ENCODE measurements at regions of chr7 and their contacts with region 1.

Region 1: GRCh38 chr7:73894733-73895551 is 34.0 kb downstream of the TMEM270 start:
- DNase-seq: peak; percentile 96 to 98
- ATAC-seq: peak; percentile 91
- H3K4me3 ChIP-seq: no peak overlapping the region
- H3K27ac ChIP-seq: peak overlapping the region; percentile 90 to 93
- H3K4me1 ChIP-seq: no peaks in the 10 kb centered on the region
- H3K27me3 ChIP-seq: no peaks in the 10 kb centered on the region

Region 2: GRCh38 chr7:73971704-73972341 is 76.9 kb after region 1 on chr7:
- intact Hi-C with region 1: loop called in 1 of 2 experiments (anchors 5 kb)
- DNase-seq: peak in 1 of 2 donors; percentile 47
- ATAC-seq: no peak
- H3K4me3 ChIP-seq: no peak overlapping the region
- H3K27ac ChIP-seq: no peak overlapping the region
- H3K4me1 ChIP-seq: no peaks in the 10 kb centered on the region
- H3K27me3 ChIP-seq: no peaks in the 10 kb centered on the region

Region 3: DNA sequence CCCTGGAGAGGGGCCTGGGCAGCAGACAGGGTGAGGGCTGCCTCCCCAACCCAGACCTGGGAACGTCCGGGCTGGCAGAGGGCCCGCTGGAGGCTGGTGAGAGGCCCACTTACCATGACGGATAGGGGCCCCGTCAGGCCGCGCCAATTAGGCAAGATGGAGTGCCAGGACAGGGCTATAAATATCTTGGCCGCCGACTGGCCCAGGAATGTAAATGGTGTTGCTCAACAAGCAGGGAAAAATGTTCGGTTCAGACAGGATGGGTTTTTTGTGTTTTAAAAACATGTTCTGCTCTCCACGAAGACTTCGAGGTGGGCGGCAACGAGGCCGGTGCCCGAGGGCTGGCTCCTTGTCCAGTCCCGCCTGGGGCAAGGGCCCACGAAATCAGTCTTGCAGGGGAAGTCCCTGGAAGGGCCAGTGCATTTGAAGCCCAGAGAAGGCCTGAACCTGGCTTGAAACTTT is 97.2 kb after region 1 on chr7:
- intact Hi-C with region 1: loop called (anchors 5 kb)
- DNase-seq: peak; percentile 93 to 96
- ATAC-seq: peak; percentile 88
- H3K4me3 ChIP-seq: no peak overlapping the region
- H3K27ac ChIP-seq: peak overlapping the region; percentile 84 to 97
- H3K4me1 ChIP-seq: no peaks in the 10 kb centered on the region
- H3K27me3 ChIP-seq: no peaks in the 10 kb centered on the region

Region 4: GRCh38 chr7:74012842-74013249 is 117.9 kb after region 1 on chr7:
- intact Hi-C with region 1: loop called in 1 of 2 experiments (anchors 5 kb)
- DNase-seq: peak; percentile 87 to 90
- ATAC-seq: peak; percentile 73
- H3K4me3 ChIP-seq: no peak overlapping the region
- H3K27ac ChIP-seq: peak overlapping the region; percentile 58 to 99
- H3K4me1 ChIP-seq: peaks cover 2 to 4% of the 10 kb centered on the region in 2 donors
- H3K27me3 ChIP-seq: no peaks in the 10 kb centered on the region

Region 5: DNA sequence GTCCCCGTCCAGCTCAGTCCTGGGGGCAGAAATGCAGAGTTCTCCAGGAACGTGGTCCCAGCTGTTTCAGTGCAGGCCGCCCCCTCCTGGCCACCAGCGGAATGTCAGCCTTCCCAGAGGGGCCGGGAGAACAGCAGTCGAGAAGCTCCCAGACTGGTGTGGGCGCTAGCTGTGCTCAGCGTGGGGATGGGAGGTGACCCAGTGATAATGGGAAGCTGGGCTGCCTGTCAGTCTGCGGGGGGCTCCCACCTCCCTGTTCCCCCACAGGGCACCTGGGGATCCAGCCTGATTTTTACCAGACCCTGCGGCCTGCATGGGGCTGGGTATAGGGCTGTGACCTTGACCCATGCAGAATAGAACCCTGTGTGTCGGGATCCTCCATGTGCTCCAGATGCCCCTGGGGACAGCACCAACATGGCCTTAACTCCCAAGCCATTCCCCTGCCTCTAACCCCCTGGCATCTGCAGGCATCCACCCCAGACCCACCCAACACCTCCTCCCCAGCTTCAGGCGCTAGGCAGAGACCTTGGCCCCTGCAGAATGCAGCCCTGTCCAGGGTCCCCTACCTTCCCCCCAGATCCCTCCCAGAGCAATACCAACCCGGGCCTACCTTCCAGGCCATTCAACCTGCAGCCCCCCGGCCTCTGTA is 132.1 kb after region 1 on chr7:
- intact Hi-C with region 1: loop called (anchors 2 to 5 kb)
- DNase-seq: peak; percentile 89 to 95
- ATAC-seq: peak; percentile 82
- H3K4me3 ChIP-seq: no peak overlapping the region
- H3K27ac ChIP-seq: peak overlapping the region; percentile 83 to 89
- H3K4me1 ChIP-seq: peaks cover 0 to 8% of the 10 kb centered on the region in 2 donors
- H3K27me3 ChIP-seq: no peaks in the 10 kb centered on the region